PC-9 (cell line): ENCODE measurements at regions of chr3 and their contacts with region 1.

Region 1: DNA sequence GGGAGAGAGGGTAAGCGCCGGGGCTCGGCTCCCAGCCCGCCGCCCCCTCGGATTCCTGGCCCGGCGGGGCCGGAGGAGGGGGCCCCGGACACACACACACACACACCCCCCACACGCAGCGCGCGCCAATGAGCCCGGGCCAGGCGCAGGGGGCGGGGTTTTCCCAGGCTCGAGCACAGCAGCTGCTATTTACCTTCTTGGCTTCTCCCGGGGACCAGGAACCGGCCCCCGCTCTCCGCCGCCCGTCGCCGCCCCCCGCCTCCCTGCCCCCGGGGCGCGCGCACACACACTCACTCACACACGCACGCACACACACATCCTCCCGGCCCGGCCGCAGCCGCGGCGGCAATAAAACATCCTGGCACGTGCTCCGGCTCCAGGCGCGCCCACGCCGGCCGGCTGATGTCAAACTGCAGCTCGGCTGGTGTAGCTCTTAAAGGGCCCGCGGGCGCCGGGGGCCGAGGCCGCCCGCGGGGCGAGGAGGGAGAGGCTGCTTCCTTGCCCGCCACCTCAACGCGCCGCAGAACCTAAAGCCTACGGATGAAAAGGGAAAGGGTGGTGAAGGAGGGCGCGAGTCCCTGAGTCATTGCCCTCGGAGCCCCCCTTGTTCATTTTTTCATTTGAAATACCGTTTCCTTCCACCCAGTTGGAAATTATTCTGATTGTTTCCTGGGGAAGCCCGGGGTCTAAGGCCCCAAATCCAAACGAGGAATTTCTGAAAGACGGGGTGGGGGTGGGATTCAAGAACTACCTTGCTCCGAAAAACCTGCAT is 1.0 kb upstream of the HES1 start:
- DNase-seq: peak; percentile 96 to 100
- H3K4me3 ChIP-seq: peak overlapping the region; percentile 55
- H3K27ac ChIP-seq: peak overlapping the region; percentile 88
- H3K4me1 ChIP-seq: peaks cover 60% of the 10 kb centered on the region
- H3K27me3 ChIP-seq: no peaks in the 10 kb centered on the region
- CTCF ChIP-seq: no peak

Region 2: DNA sequence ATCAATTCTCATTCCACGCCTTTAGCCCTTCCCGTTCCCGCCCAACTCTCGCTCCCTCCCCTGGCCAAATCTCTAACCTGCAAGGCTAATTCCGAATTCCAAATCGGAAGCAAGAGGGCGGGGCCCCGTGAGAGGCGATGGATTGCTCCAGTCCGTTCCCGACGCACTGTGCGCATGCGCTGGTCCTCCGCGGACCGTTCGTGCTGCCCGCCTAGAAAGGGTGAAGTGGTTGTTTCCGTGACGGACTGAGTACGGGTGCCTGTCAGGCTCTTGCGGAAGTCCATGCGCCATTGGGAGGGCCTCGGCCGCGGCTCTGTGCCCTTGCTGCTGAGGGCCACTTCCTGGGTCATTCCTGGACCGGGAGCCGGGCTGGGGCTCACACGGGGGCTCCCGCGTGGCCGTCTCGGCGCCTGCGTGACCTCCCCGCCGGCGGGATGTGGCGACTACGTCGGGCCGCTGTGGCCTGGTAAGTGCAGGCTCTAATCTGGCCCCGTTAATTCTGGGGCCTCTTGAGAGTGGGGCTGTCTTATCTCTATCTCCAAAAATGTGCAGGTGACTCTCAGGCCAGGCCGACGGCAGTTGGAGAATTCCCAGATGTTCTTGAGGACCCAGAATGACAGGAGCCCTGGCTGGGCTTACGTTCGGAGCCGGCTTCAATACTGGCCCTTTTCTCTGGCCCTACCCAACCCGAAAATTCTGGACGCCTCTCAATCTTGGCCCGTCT is 541.8 kb before region 1 on chr3 and contains the start of gene OPA1:
- CTCF ChIA-PET with region 1: no interaction called
- POLR2A ChIA-PET with region 1: no interaction called
- intact Hi-C with region 1: loop called (anchors 5 kb)
- DNase-seq: peak; percentile 98 to 99
- H3K4me3 ChIP-seq: peak within 1 kb of the TSS; percentile 89
- H3K27ac ChIP-seq: peak within 1 kb of the TSS; percentile 61
- H3K4me1 ChIP-seq: peaks cover 38% of the 10 kb centered on the region
- H3K27me3 ChIP-seq: no peaks in the 10 kb centered on the region
- CTCF ChIP-seq: no peak
- total RNA-seq, gene OPA1: 105 and 120 TPM in 2 replicates

Region 3: GRCh38 chr3:193788189-193788991 is 346.6 kb before region 1 on chr3:
- CTCF ChIA-PET with region 1: interaction called, 13 read pairs
- POLR2A ChIA-PET with region 1: interaction called, 6 read pairs
- intact Hi-C with region 1: no loop called
- DNase-seq: peak in 1 of 2 experiments; percentile 55
- H3K4me3 ChIP-seq: no peak overlapping the region
- H3K27ac ChIP-seq: no peak overlapping the region
- H3K4me1 ChIP-seq: peaks cover 47% of the 10 kb centered on the region
- H3K27me3 ChIP-seq: no peaks in the 10 kb centered on the region
- CTCF ChIP-seq: peak; percentile 43; the same call in 1 of the 2 replicates

Region 4: GRCh38 chr3:193872265-193872753 is 262.6 kb before region 1 on chr3:
- CTCF ChIA-PET with region 1: interaction called, 9 read pairs
- POLR2A ChIA-PET with region 1: interaction called, 37 read pairs
- intact Hi-C with region 1: loop called (anchors 1 kb)
- DNase-seq: peak; percentile 94 to 100
- H3K4me3 ChIP-seq: no peak overlapping the region; the same call in 1 of the 2 replicates
- H3K27ac ChIP-seq: peak overlapping the region; percentile 94
- H3K4me1 ChIP-seq: peaks cover 83% of the 10 kb centered on the region
- H3K27me3 ChIP-seq: no peaks in the 10 kb centered on the region
- CTCF ChIP-seq: no peak

Region 5: DNA sequence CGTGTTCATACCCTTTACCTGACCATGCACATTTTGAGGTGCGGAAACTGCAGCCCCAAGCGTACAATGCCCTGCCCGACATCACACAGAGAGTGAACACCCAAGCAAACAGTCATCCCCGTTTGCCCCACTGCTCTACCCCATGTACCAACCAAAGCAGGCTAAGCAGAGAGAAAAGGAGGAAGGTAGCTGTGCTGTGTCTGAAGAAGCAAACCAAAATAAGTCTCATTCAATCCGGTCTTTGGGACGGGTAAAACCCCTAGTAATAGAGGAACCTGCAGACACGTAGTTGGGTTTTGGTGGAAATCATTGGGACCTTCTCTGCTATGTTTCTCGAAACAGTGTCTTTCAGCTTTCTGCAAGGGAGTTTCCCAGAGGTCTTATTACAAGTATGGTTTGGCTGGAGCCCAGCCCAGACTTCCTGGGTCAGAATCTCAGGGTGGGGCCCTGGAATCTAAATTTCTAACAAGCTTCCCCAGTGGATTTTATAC is 163.6 kb before region 1 on chr3:
- CTCF ChIA-PET with region 1: no interaction called
- POLR2A ChIA-PET with region 1: no interaction called
- intact Hi-C with region 1: loop called (anchors 1 kb)
- DNase-seq: peak; percentile 72 to 81
- H3K4me3 ChIP-seq: no peak overlapping the region
- H3K27ac ChIP-seq: no peak overlapping the region
- H3K4me1 ChIP-seq: peaks cover 48% of the 10 kb centered on the region
- H3K27me3 ChIP-seq: no peaks in the 10 kb centered on the region
- CTCF ChIP-seq: no peak

Region 6: GRCh38 chr3:194089357-194090177 is 45.4 kb before region 1 on chr3:
- CTCF ChIA-PET with region 1: interaction called, 3 read pairs
- POLR2A ChIA-PET with region 1: interaction called, 17 read pairs
- intact Hi-C with region 1: loop called (anchors 1 kb)
- DNase-seq: peak; percentile 98 to 100
- H3K4me3 ChIP-seq: peak overlapping the region; percentile 16; the same call in 1 of the 2 replicates
- H3K27ac ChIP-seq: peak overlapping the region; percentile 98
- H3K4me1 ChIP-seq: peaks cover 48% of the 10 kb centered on the region
- H3K27me3 ChIP-seq: no peaks in the 10 kb centered on the region
- CTCF ChIP-seq: no peak

Region 7: DNA sequence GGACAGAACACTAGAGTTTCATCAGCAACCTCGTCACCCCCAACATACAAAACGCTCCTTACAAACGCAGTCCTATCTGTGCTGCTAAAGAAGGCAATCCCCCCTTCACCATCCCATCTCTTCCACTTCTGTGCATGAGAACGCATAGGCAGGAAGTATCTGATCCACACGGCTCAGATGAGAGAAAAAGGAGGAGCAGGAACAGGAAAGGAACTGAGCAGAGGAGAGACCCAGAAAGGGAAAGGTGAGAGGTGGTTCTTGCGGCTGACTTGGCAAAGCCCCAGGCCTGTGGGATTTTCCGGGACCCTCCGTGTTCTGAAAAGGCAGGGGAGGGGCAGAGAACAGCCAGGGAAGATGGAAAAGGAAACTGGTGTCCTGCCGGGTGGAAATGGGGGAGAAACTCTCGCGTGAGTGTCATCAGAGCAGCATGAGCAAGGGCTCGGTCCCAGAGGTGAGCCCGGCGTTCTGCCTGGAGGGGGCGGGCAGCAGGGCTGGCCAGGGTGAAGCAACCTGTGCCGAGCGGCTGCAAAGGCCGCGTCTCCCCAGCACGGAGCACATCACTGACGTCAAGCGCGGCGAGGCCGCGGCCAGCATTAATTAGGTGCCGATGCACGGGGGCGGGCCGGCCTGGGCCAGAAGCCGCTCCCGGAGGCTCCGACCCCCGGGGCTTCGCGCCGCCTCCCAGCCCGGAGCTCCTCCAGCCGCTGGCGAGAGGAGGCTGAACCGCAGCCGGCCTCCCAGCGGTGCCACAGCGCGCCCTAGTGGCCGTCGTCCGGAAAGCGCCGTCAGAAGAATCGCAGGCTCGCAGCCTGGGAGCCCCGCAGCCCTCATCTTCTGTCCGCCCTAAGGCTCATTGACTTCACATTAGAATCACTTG is 180.4 kb after region 1 on chr3:
- CTCF ChIA-PET with region 1: interaction called, 10 read pairs
- POLR2A ChIA-PET with region 1: interaction called, 34 read pairs
- intact Hi-C with region 1: loop called (anchors 1 kb)
- DNase-seq: peak; percentile 91 to 97
- H3K4me3 ChIP-seq: peak overlapping the region; percentile 51
- H3K27ac ChIP-seq: peak overlapping the region; percentile 75
- H3K4me1 ChIP-seq: peaks cover 27% of the 10 kb centered on the region
- H3K27me3 ChIP-seq: no peaks in the 10 kb centered on the region
- CTCF ChIP-seq: peak; percentile 99

Region 8: DNA sequence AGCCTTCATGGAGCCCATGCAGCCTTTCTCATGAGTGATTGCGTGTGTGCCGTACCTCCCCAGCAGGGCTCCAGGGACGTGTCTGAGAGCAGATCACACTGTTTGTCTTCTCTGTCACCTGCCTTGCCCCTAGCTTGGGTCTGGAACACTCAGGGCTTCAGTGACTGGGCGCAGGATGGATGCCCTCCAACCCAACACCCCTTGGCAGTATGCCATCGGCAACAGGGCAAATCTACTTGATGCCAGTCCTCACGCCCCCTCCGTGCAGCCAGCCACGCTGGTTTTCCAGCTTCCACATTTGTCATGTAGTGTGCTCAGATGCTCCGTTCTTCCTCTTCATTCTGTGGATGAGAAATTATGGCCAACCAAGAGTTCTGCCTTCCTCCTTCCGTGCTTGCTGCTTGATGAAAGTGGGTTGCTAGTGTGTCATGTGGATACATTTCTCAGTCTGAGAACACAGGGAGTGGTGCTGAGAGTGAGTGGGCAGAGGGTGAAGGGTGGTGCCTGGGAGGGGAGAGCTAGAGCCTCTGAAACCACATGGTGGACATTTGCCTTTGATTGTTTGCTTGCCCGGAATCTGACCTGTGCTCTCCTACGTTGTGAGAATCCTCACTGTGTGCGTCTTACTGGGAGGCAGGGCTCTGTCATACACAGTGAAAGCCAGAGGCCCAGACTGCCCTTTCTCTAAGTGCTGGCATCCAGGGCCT is 647.9 kb after region 1 on chr3:
- CTCF ChIA-PET with region 1: no interaction called
- POLR2A ChIA-PET with region 1: no interaction called
- intact Hi-C with region 1: no loop called
- DNase-seq: no peak
- H3K4me3 ChIP-seq: no peak overlapping the region
- H3K27ac ChIP-seq: no peak overlapping the region
- H3K4me1 ChIP-seq: 0 out of 2 replicates have a peak, but pooled peaks cover 4% of the 10 kb centered on the region
- H3K27me3 ChIP-seq: no peaks in the 10 kb centered on the region
- CTCF ChIP-seq: no peak